ENCODE measurements at regions of chr3 and their contacts with region 1.

Region 1: DNA sequence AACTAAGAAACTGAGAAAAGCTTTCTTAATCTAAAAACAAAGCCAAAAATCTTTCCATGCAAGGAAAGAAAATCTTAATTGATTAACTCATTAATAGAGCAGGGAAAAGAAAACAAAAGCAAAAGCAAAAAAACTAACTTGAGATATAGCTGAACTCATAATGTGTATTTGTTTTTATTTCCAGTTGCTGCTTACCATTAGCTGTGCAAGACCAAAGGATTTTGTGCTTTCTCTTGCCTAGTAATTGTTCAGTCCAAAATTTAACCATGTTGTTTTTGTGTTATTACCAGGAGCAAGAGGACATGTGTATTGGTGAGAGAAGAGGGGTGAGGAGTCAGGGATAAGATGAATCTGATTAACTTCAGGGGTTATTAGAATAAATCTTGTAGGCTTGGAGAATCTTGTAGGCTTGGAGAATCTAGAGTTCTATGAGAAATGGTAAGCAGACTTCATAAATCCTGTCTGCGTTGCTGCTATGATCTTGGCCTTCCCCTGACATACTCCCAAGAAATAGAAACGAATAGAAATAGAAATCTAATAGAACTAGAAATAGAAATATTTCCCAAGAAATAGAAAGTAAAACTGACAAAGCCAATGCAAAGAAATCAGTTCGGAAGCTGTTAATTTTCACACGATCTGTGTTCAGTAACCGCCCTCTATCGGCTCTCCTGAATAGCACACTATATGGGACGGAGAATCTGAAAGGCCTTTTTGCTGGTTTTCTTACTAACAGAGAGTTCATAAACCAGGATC is 72.6 kb upstream of the TNFSF10 start:
- DNase-seq: peak in 7 of 9 experiments; percentile 18 to 82 (median 34)
- ATAC-seq: peak; percentile 67
- H3K4me3 ChIP-seq: peak overlapping the region; percentile 12 to 35
- H3K4me3 Mint-ChIP-seq: peak overlapping the region; percentile 80
- H3K27ac ChIP-seq: peak overlapping the region in 1 of 2 experiments; percentile 63
- H3K27ac Mint-ChIP-seq: peak overlapping the region; percentile 42
- H3K4me1 ChIP-seq: peaks cover 32% of the 10 kb centered on the region
- H3K4me1 Mint-ChIP-seq: peaks cover 46% of the 10 kb centered on the region
- H3K27me3 ChIP-seq: no peaks in the 10 kb centered on the region
- H3K27me3 Mint-ChIP-seq: no peaks in the 10 kb centered on the region
- CTCF ChIP-seq: peak; percentile 95

Region 2: GRCh38 chr3:170792471-170792870 is 1803.3 kb before region 1 on chr3:
- CTCF ChIA-PET with region 1: no interaction called
- POLR2A ChIA-PET with region 1: no interaction called
- intact Hi-C with region 1: no loop called
- DNase-seq: no peak
- ATAC-seq: no peak
- H3K4me3 ChIP-seq: no peak overlapping the region
- H3K4me3 Mint-ChIP-seq: no peak overlapping the region
- H3K27ac ChIP-seq: no peak overlapping the region
- H3K27ac Mint-ChIP-seq: no peak overlapping the region
- H3K4me1 ChIP-seq: no peaks in the 10 kb centered on the region
- H3K4me1 Mint-ChIP-seq: no peaks in the 10 kb centered on the region
- H3K27me3 ChIP-seq: no peaks in the 10 kb centered on the region
- H3K27me3 Mint-ChIP-seq: peaks cover 5% of the 10 kb centered on the region
- CTCF ChIP-seq: no peak

Region 3: DNA sequence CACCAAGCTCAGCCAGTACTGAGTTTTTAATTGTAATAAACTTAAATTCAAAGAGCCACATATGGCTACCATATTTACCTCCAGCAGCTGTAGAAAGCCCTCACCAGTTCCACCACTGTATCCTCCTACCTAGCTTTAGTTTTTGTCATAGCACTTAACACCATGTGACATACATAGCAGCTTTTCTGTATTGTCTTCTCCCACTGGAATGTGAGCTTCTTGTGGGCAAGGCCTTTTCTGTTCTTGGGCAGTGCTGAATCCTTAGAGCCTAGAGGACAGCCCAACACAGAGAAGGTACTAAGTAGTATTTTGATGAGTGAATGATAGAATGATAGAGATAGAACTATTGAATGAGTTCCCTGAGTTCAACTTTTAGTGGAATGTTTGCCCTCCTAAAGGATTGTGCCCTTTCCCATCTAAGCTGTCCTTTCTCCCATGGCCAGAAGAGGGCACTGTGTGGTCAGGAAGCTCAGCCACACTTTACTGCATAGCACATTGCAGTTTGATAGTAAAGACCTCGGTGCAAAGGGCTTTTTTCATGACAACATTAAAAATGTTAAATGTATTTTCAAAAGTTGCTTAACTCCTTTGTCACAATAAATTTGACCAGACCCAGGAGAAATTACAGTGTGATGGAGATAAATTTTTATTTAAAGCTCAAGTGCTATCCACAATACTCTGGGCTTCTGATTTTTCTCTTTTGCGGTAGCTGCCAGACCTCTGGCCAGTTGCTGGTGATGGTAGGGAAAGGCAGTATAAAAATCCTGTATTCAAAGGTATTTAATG is 263.4 kb before region 1 on chr3:
- CTCF ChIA-PET with region 1: interaction called, 6 read pairs
- POLR2A ChIA-PET with region 1: no interaction called
- intact Hi-C with region 1: loop called (anchors 5 to 10 kb)
- DNase-seq: peak; percentile 4 to 71 (median 53)
- ATAC-seq: peak; percentile 81
- H3K4me3 ChIP-seq: no peak overlapping the region
- H3K4me3 Mint-ChIP-seq: no peak overlapping the region
- H3K27ac ChIP-seq: no peak overlapping the region
- H3K27ac Mint-ChIP-seq: no peak overlapping the region
- H3K4me1 ChIP-seq: no peaks in the 10 kb centered on the region
- H3K4me1 Mint-ChIP-seq: peaks cover 2% of the 10 kb centered on the region
- H3K27me3 ChIP-seq: no peaks in the 10 kb centered on the region
- H3K27me3 Mint-ChIP-seq: no peaks in the 10 kb centered on the region
- CTCF ChIP-seq: peak; percentile 79

Region 4: GRCh38 chr3:172506094-172506493 is 89.7 kb before region 1 on chr3:
- CTCF ChIA-PET with region 1: interaction called, 11 read pairs
- POLR2A ChIA-PET with region 1: no interaction called
- intact Hi-C with region 1: no loop called
- DNase-seq: no peak
- ATAC-seq: no peak
- H3K4me3 ChIP-seq: no peak overlapping the region
- H3K4me3 Mint-ChIP-seq: no peak overlapping the region
- H3K27ac ChIP-seq: no peak overlapping the region
- H3K27ac Mint-ChIP-seq: peak overlapping the region; percentile 16
- H3K4me1 ChIP-seq: no peaks in the 10 kb centered on the region
- H3K4me1 Mint-ChIP-seq: peaks cover 3% of the 10 kb centered on the region
- H3K27me3 ChIP-seq: no peaks in the 10 kb centered on the region
- H3K27me3 Mint-ChIP-seq: no peaks in the 10 kb centered on the region
- CTCF ChIP-seq: no peak

Region 5: GRCh38 chr3:172522871-172523818 is 72.7 kb before region 1 on chr3 and contains the start of gene TNFSF10:
- CTCF ChIA-PET with region 1: interaction called, 13 read pairs
- POLR2A ChIA-PET with region 1: no interaction called
- intact Hi-C with region 1: no loop called
- DNase-seq: peak; percentile 15 to 81 (median 51)
- ATAC-seq: peak; percentile 76
- H3K4me3 ChIP-seq: peak within 1 kb of the TSS; percentile 70 to 76
- H3K4me3 Mint-ChIP-seq: peak within 1 kb of the TSS; percentile 96
- H3K27ac ChIP-seq: peak within 1 kb of the TSS; percentile 66 to 87
- H3K27ac Mint-ChIP-seq: peak within 1 kb of the TSS; percentile 98
- H3K4me1 ChIP-seq: peaks cover 26% of the 10 kb centered on the region
- H3K4me1 Mint-ChIP-seq: peaks cover 53% of the 10 kb centered on the region
- H3K27me3 ChIP-seq: no peaks in the 10 kb centered on the region
- H3K27me3 Mint-ChIP-seq: no peaks in the 10 kb centered on the region
- CTCF ChIP-seq: no peak
- total RNA-seq, gene TNFSF10: 3.6 to 4.1 TPM

Region 6: DNA sequence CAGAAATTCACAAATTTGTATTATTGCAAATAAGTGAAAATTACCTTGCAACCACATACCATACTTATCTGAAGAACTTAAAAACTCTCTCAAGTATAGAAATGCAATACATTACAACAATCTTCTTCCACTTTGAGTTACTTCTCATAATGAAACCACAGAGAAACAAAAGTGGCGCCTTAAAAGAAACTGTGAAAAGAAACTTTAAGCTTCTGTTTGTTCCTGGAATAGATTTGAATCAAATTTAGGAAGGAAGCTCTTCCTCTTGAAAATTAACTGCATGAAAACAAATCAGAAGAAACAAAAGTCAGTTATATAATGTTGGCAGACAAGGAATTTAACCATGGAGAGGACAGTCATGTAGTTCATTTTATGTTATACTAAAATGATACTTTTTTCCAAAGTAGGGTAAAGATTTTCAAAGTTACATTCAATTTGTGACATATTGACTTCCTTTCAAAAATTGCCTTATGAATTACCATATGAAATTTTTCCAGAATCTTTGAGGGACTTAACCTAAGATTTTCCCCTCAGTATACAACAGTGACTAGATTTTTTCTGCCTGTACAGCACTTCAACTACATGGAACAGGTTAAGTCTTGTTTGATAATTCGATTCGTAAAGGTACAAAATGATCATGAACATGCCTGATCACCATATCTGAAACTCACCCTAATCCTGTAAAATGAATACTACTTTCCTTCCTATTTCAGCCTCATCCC is 15.0 kb before region 1 on chr3:
- CTCF ChIA-PET with region 1: interaction called, 14 read pairs
- POLR2A ChIA-PET with region 1: no interaction called
- intact Hi-C with region 1: no loop called
- DNase-seq: peak in 2 of 9 experiments; percentile 7 to 22
- ATAC-seq: no peak
- H3K4me3 ChIP-seq: no peak overlapping the region
- H3K4me3 Mint-ChIP-seq: peak overlapping the region; percentile 32
- H3K27ac ChIP-seq: peak overlapping the region in 1 of 2 experiments; percentile 47
- H3K27ac Mint-ChIP-seq: peak overlapping the region; percentile 75
- H3K4me1 ChIP-seq: peaks cover 29% of the 10 kb centered on the region
- H3K4me1 Mint-ChIP-seq: peaks cover 52% of the 10 kb centered on the region
- H3K27me3 ChIP-seq: no peaks in the 10 kb centered on the region
- H3K27me3 Mint-ChIP-seq: no peaks in the 10 kb centered on the region
- CTCF ChIP-seq: no peak

Region 7: GRCh38 chr3:172614340-172615274 is 18.8 kb after region 1 on chr3:
- CTCF ChIA-PET with region 1: interaction called, 12 read pairs
- POLR2A ChIA-PET with region 1: no interaction called
- intact Hi-C with region 1: no loop called
- DNase-seq: no peak
- ATAC-seq: no peak
- H3K4me3 ChIP-seq: no peak overlapping the region
- H3K4me3 Mint-ChIP-seq: no peak overlapping the region
- H3K27ac ChIP-seq: no peak overlapping the region
- H3K27ac Mint-ChIP-seq: no peak overlapping the region
- H3K4me1 ChIP-seq: peaks cover 9% of the 10 kb centered on the region
- H3K4me1 Mint-ChIP-seq: peaks cover 13% of the 10 kb centered on the region
- H3K27me3 ChIP-seq: no peaks in the 10 kb centered on the region
- H3K27me3 Mint-ChIP-seq: no peaks in the 10 kb centered on the region
- CTCF ChIP-seq: no peak

Region 8: GRCh38 chr3:172750368-172751174 is 154.8 kb after region 1 on chr3 and contains the start of gene ECT2:
- CTCF ChIA-PET with region 1: no interaction called
- POLR2A ChIA-PET with region 1: no interaction called
- intact Hi-C with region 1: loop called in 1 of 2 experiments (anchors 5 kb)
- DNase-seq: peak; percentile 92 to 99 (median 96)
- ATAC-seq: peak; percentile 98
- H3K4me3 ChIP-seq: peak within 1 kb of the TSS; percentile 90 to 96
- H3K4me3 Mint-ChIP-seq: peak within 1 kb of the TSS; percentile 98
- H3K27ac ChIP-seq: peak within 1 kb of the TSS; percentile 66 to 69
- H3K27ac Mint-ChIP-seq: peak within 1 kb of the TSS; percentile 62
- H3K4me1 ChIP-seq: peaks cover 12% of the 10 kb centered on the region
- H3K4me1 Mint-ChIP-seq: peaks cover 15% of the 10 kb centered on the region
- H3K27me3 ChIP-seq: no peaks in the 10 kb centered on the region
- H3K27me3 Mint-ChIP-seq: no peaks in the 10 kb centered on the region
- CTCF ChIP-seq: peak; percentile 72
- total RNA-seq, gene ECT2: 1.3 to 1.5 TPM

Region 9: DNA sequence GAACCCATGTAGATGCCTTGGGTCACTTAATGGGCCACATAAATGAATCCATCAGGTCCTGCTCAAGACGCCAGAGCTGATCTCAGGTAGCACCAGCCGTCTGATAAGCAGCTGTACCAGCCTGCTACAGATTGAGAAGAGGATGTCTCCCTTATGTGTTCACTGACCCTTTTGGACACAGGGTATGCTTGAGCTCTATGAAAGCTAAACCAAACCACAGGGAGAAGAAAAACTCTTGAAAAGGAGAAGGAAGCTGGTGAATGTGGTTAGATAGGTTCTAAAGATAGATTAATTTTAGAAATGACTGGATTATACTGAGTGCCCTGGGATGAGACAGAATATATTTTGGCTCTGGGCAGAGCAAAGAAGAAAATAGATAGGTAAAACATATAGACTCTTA is 357.8 kb after region 1 on chr3:
- CTCF ChIA-PET with region 1: no interaction called
- POLR2A ChIA-PET with region 1: no interaction called
- intact Hi-C with region 1: no loop called
- DNase-seq: no peak
- ATAC-seq: no peak
- H3K4me3 ChIP-seq: no peak overlapping the region
- H3K4me3 Mint-ChIP-seq: no peak overlapping the region
- H3K27ac ChIP-seq: no peak overlapping the region
- H3K27ac Mint-ChIP-seq: no peak overlapping the region
- H3K4me1 ChIP-seq: no peaks in the 10 kb centered on the region
- H3K4me1 Mint-ChIP-seq: no peaks in the 10 kb centered on the region
- H3K27me3 ChIP-seq: no peaks in the 10 kb centered on the region
- H3K27me3 Mint-ChIP-seq: no peaks in the 10 kb centered on the region
- CTCF ChIP-seq: no peak

Measured in CD8-positive, alpha-beta T cell (primary cell).